Activated B cell treated with CpG ODN at 0.5 μM for 24 hours (primary cell): ENCODE measurements at regions of chr16 and their contacts with region 1.

Region 1: DNA sequence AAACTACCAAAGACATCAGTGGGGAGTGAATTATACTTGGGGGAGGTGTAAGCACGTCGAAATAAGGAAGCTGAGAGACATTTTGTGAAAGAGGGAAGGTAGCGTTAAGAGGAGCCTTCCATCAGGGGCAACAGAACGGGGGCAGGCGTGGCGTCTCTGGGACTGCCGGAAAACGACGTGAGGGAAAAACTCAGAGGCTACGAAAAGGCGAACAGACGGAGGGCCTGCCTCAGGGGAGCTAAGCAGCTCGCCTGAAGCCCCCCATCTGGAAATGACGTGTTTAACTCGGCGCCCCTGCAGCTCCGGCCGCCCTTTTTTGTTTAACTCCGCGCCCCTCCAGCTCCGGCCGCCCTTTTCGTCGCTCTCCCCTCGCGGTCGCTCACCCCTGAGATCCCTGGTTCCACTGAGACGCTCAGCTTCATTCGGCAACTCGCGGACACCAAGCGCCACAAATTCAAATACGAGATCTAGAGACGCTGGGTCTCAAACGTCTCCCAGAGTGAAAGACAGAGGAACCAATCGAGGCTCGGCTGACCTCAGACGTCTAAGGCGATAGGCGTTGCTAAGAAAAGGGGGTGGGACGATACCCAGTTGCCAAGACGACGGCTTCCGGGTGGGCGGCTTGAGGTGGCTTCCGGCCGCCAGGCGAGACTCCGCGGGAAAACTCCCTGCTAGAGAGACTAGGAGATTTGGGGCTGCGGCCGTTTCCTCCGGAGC is 383.3 kb downstream of the ZFHX3 start:
- DNase-seq: peak; percentile 85
- ATAC-seq: peak; percentile 99
- H3K4me3 Mint-ChIP-seq: peak overlapping the region; percentile 98
- H3K27ac Mint-ChIP-seq: peak overlapping the region; percentile 95
- H3K4me1 Mint-ChIP-seq: peaks cover 20% of the 10 kb centered on the region
- H3K27me3 Mint-ChIP-seq: no peaks in the 10 kb centered on the region
- CTCF ChIP-seq: no peak

Region 2: DNA sequence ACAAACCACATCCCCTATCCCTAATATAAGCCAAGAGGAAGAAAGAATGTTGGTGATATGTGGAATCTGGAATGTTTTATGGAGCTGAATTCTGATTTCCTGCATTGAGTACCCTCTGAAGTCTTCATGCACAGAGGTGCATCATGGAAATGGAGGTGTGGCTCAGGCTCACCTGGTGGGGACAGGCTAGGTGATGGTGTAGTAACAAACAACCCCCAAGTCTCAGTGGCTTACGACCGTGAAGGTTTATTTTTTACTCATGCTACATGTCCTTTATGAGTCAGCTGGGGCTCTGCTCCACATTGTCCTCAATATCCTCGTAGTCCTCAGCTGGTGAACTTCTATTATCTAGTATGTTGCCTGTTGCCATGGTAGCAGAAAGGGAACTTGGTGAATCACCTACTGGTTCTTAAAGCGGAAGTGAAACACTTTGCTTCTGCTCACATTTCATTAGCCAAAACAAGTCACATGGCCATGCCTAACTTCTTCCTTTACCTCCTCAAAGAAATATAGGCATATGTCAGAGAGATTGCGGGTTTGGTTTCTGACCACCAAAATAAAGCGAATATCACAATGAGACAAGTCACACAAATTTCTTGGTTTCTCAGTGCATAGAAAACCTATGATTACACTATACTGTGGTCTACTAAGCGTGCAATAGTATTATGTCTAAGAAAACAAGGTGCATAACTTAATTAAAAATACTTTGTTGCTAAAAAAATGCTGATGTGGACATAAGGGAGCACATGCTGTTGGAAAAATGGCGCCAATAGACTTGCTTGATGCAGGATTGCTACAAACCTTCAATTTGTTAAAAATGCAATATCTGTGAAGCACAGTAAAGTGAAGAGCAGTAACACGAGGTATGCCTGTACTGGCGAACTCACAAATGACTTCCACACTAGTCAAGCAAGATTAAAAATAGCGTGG is 492.3 kb before region 1 on chr16 and contains the start of gene PMFBP1:
- CTCF ChIA-PET with region 1: no interaction called
- POLR2A ChIA-PET with region 1: no interaction called
- intact Hi-C with region 1: loop called (anchors 1 kb)
- DNase-seq: peak; percentile 17
- ATAC-seq: peak; percentile 95
- H3K4me3 Mint-ChIP-seq: peak within 1 kb of the TSS; percentile 6
- H3K27ac Mint-ChIP-seq: peak within 1 kb of the TSS; percentile 85
- H3K4me1 Mint-ChIP-seq: peaks cover 12% of the 10 kb centered on the region
- H3K27me3 Mint-ChIP-seq: no peaks in the 10 kb centered on the region
- CTCF ChIP-seq: no peak
- total RNA-seq, gene PMFBP1: 5.7 and 5.9 TPM in 2 replicates

Region 3: GRCh38 chr16:72590151-72590937 is 74.3 kb before region 1 on chr16:
- CTCF ChIA-PET with region 1: no interaction called
- POLR2A ChIA-PET with region 1: interaction called, 4 read pairs
- intact Hi-C with region 1: loop called (anchors 1 kb)
- DNase-seq: no peak
- ATAC-seq: peak; percentile 75
- H3K4me3 Mint-ChIP-seq: peak overlapping the region; percentile 61
- H3K27ac Mint-ChIP-seq: peak overlapping the region; percentile 82
- H3K4me1 Mint-ChIP-seq: peaks cover 56% of the 10 kb centered on the region
- H3K27me3 Mint-ChIP-seq: no peaks in the 10 kb centered on the region
- CTCF ChIP-seq: no peak

Region 4: DNA sequence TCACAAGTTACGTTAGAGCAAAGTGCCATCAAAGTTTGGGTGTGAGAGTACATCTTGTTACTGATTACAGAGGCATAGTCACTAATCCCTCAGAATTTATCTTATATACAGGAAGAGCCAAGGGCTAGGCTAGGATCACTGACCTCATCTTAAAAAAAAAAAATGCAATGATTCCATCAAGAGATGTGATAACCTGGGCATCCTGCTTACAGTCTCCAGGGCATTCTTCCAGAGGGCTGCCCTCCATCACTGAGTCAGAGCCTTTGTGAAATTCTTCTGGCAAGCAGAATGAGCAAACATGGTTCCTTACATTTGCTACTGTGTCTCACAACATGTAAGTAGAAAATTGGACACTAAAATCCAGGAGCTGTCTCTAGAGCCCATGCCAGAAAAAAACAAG is 27.4 kb before region 1 on chr16:
- CTCF ChIA-PET with region 1: no interaction called
- POLR2A ChIA-PET with region 1: no interaction called
- intact Hi-C with region 1: no loop called
- DNase-seq: no peak
- ATAC-seq: no peak
- H3K4me3 Mint-ChIP-seq: no peak overlapping the region
- H3K27ac Mint-ChIP-seq: no peak overlapping the region
- H3K4me1 Mint-ChIP-seq: no peaks in the 10 kb centered on the region
- H3K27me3 Mint-ChIP-seq: no peaks in the 10 kb centered on the region
- CTCF ChIP-seq: no peak

Region 5: GRCh38 chr16:72884037-72884436 is 219.4 kb after region 1 on chr16:
- CTCF ChIA-PET with region 1: no interaction called
- POLR2A ChIA-PET with region 1: no interaction called
- intact Hi-C with region 1: no loop called
- DNase-seq: no peak
- ATAC-seq: no peak
- H3K4me3 Mint-ChIP-seq: no peak overlapping the region
- H3K27ac Mint-ChIP-seq: no peak overlapping the region
- H3K4me1 Mint-ChIP-seq: no peaks in the 10 kb centered on the region
- H3K27me3 Mint-ChIP-seq: no peaks in the 10 kb centered on the region
- CTCF ChIP-seq: no peak

Region 6: GRCh38 chr16:73047518-73048291 is 383.0 kb after region 1 on chr16 and contains the start of gene ZFHX3:
- CTCF ChIA-PET with region 1: no interaction called
- POLR2A ChIA-PET with region 1: no interaction called
- intact Hi-C with region 1: loop called (anchors 5 kb)
- DNase-seq: peak; percentile 70
- ATAC-seq: peak; percentile 87
- H3K4me3 Mint-ChIP-seq: peak within 1 kb of the TSS; percentile 82
- H3K27ac Mint-ChIP-seq: peak within 1 kb of the TSS; percentile 50
- H3K4me1 Mint-ChIP-seq: peaks cover 17% of the 10 kb centered on the region
- H3K27me3 Mint-ChIP-seq: peaks cover 3% of the 10 kb centered on the region
- CTCF ChIP-seq: no peak
- total RNA-seq, gene ZFHX3: 9.2 and 9.6 TPM in 2 replicates

Region 7: GRCh38 chr16:74296432-74297144 is 1631.9 kb after region 1 on chr16 and contains the start of gene PSMD7:
- CTCF ChIA-PET with region 1: no interaction called
- POLR2A ChIA-PET with region 1: no interaction called
- intact Hi-C with region 1: loop called (anchors 2 kb)
- DNase-seq: peak; percentile 89
- ATAC-seq: peak; percentile 94
- H3K4me3 Mint-ChIP-seq: peak within 1 kb of the TSS; percentile 87
- H3K27ac Mint-ChIP-seq: peak within 1 kb of the TSS; percentile 90
- H3K4me1 Mint-ChIP-seq: peaks cover 33% of the 10 kb centered on the region
- H3K27me3 Mint-ChIP-seq: no peaks in the 10 kb centered on the region
- CTCF ChIP-seq: no peak
- total RNA-seq, gene PSMD7: 86.1 and 91.8 TPM in 2 replicates